Activated CD8-positive, alpha-beta T cell treated with anti-CD3 and anti-CD28 coated beads for 36 hours (primary cell): ENCODE measurements at regions of chr4 and their contacts with region 1.

Region 1: GRCh38 chr4:165464813-165465381 is 86.1 kb downstream of the CPE start:
- DNase-seq: peak; percentile 34
- ATAC-seq: peak; percentile 58
- H3K4me3 Mint-ChIP-seq: no peak overlapping the region
- H3K27ac Mint-ChIP-seq: no peak overlapping the region
- H3K4me1 Mint-ChIP-seq: no peaks in the 10 kb centered on the region
- H3K27me3 Mint-ChIP-seq: peaks cover 3% of the 10 kb centered on the region
- CTCF ChIP-seq: peak; percentile 83

Region 2: GRCh38 chr4:165112368-165113139 is 352.3 kb before region 1 on chr4 and contains the start of gene TMEM192:
- CTCF ChIA-PET with region 1: interaction called, 11 read pairs
- POLR2A ChIA-PET with region 1: no interaction called
- intact Hi-C with region 1: no loop called
- DNase-seq: peak; percentile 92
- ATAC-seq: peak; percentile 99
- H3K4me3 Mint-ChIP-seq: peak within 1 kb of the TSS; percentile 86
- H3K27ac Mint-ChIP-seq: peak within 1 kb of the TSS; percentile 94
- H3K4me1 Mint-ChIP-seq: peaks cover 15% of the 10 kb centered on the region
- H3K27me3 Mint-ChIP-seq: no peaks in the 10 kb centered on the region
- CTCF ChIP-seq: no peak
- total RNA-seq, gene TMEM192: 7.9 to 10.6 TPM

Region 3: GRCh38 chr4:165301833-165302232 is 163.1 kb before region 1 on chr4:
- CTCF ChIA-PET with region 1: no interaction called
- POLR2A ChIA-PET with region 1: no interaction called
- intact Hi-C with region 1: no loop called
- DNase-seq: peak; percentile 14
- ATAC-seq: peak; percentile 89
- H3K4me3 Mint-ChIP-seq: peak overlapping the region; percentile 69
- H3K27ac Mint-ChIP-seq: peak overlapping the region; percentile 83
- H3K4me1 Mint-ChIP-seq: peaks cover 18% of the 10 kb centered on the region
- H3K27me3 Mint-ChIP-seq: no peaks in the 10 kb centered on the region
- CTCF ChIP-seq: no peak

Region 4: GRCh38 chr4:165355900-165356300 is 109.0 kb before region 1 on chr4:
- CTCF ChIA-PET with region 1: interaction called, 9 read pairs
- POLR2A ChIA-PET with region 1: no interaction called
- intact Hi-C with region 1: loop called (anchors 5 kb)
- DNase-seq: peak; percentile 51
- ATAC-seq: peak; percentile 49
- H3K4me3 Mint-ChIP-seq: no peak overlapping the region
- H3K27ac Mint-ChIP-seq: no peak overlapping the region
- H3K4me1 Mint-ChIP-seq: no peaks in the 10 kb centered on the region
- H3K27me3 Mint-ChIP-seq: peaks cover 17% of the 10 kb centered on the region
- CTCF ChIP-seq: peak; percentile 29

Region 5: GRCh38 chr4:165512424-165512823 is 47.5 kb after region 1 on chr4:
- CTCF ChIA-PET with region 1: no interaction called
- POLR2A ChIA-PET with region 1: no interaction called
- intact Hi-C with region 1: no loop called
- DNase-seq: no peak
- ATAC-seq: no peak
- H3K4me3 Mint-ChIP-seq: no peak overlapping the region
- H3K27ac Mint-ChIP-seq: no peak overlapping the region
- H3K4me1 Mint-ChIP-seq: no peaks in the 10 kb centered on the region
- H3K27me3 Mint-ChIP-seq: no peaks in the 10 kb centered on the region
- CTCF ChIP-seq: no peak